MCF 10A (cell line): ENCODE measurements at regions of chrX and their contacts with region 1.

Region 1: GRCh38 chrX:14095702-14096101 is 66.0 kb upstream of the GEMIN8 start:
- DNase-seq: peak; percentile 82
- H3K4me3 Mint-ChIP-seq: no peak overlapping the region
- H3K27ac Mint-ChIP-seq: no peak overlapping the region
- H3K4me1 Mint-ChIP-seq: no peaks in the 10 kb centered on the region
- H3K27me3 Mint-ChIP-seq: peaks cover 80% of the 10 kb centered on the region
- CTCF ChIP-seq: peak; percentile 79

Region 2: DNA sequence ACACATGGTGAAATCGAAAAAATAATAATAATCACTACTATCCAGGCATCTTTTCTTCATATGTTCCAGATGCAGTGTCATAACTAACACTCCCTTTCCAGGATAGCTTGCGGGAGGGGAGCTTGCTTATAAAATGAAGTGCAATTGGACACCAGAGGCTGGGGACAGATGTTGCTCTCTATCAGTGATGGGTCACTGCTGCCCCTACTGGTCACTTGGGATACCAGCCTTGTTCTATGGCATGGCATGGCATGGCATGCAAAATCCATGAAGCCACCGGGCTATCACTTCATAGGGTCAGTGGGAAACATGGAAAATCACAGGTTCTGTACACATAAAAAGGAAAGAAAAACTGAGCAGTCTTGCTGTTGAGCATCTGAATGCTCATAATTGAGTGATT is 601.7 kb after region 1 on chrX:
- CTCF ChIA-PET with region 1: no interaction called
- POLR2A ChIA-PET with region 1: no interaction called
- intact Hi-C with region 1: loop called (anchors 1 kb)
- DNase-seq: peak; percentile 74
- H3K4me3 Mint-ChIP-seq: no peak overlapping the region
- H3K27ac Mint-ChIP-seq: no peak overlapping the region
- H3K4me1 Mint-ChIP-seq: no peaks in the 10 kb centered on the region
- H3K27me3 Mint-ChIP-seq: peaks cover 23% of the 10 kb centered on the region
- CTCF ChIP-seq: peak; percentile 53